ENCODE measurements at regions of chr4 and their contacts with region 1.

Region 1: DNA sequence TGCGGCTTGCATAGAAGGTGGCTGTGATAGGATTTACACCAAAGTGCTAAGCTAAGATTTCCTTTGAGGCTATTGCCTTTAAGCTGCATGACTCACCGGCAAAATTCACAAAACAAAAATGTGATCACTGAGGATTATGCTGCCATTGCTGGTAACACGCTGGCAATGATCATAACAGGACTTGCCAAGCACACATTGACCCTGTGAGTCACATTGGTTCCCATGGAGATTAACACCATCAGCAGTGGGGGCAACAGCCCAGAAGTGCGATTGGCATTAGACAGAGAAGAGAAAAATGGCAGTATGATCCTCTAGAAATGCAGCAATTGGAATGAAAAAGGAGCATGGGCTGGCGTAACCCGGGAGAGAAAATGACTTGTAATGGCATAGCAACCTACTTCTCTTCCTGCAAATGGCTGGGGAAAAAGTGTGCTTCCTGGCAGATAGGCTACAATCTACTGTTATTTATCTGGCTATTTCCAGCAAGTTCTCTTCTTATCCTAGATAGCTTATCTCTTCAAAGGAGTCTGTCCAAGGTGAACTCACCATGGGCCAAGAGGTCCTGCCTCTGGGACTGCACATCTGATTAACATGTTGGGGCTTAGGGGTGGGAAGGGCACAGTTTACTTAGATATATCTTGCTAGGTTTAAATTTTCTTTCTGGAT is 314.2 kb upstream of the IGFBP7 start:
- DNase-seq: peak; percentile 96
- H3K4me3 ChIP-seq: peak overlapping the region; percentile 24; the same call in 1 of the 2 replicates
- H3K27ac ChIP-seq: peak overlapping the region; percentile 82
- H3K4me1 ChIP-seq: peaks cover 33% of the 10 kb centered on the region
- H3K27me3 ChIP-seq: no peaks in the 10 kb centered on the region

Region 2: GRCh38 chr4:56958111-56958517 is 466.3 kb before region 1 on chr4:
- in situ Hi-C with region 1: no loop called
- DNase-seq: peak; percentile 99
- H3K4me3 ChIP-seq: peak overlapping the region; percentile 60
- H3K27ac ChIP-seq: peak overlapping the region; percentile 94
- H3K4me1 ChIP-seq: peaks cover 13% of the 10 kb centered on the region
- H3K27me3 ChIP-seq: no peaks in the 10 kb centered on the region

Region 3: GRCh38 chr4:57037982-57038604 is 386.3 kb before region 1 on chr4:
- in situ Hi-C with region 1: loop called (anchors 25 kb)
- DNase-seq: peak; percentile 74
- H3K4me3 ChIP-seq: no peak overlapping the region
- H3K27ac ChIP-seq: no peak overlapping the region
- H3K4me1 ChIP-seq: peaks cover 15% of the 10 kb centered on the region
- H3K27me3 ChIP-seq: no peaks in the 10 kb centered on the region

Region 4: GRCh38 chr4:57676394-57676793 is 252.0 kb after region 1 on chr4:
- in situ Hi-C with region 1: no loop called
- DNase-seq: no peak
- H3K4me3 ChIP-seq: no peak overlapping the region
- H3K27ac ChIP-seq: no peak overlapping the region
- H3K4me1 ChIP-seq: no peaks in the 10 kb centered on the region
- H3K27me3 ChIP-seq: no peaks in the 10 kb centered on the region

Region 5: DNA sequence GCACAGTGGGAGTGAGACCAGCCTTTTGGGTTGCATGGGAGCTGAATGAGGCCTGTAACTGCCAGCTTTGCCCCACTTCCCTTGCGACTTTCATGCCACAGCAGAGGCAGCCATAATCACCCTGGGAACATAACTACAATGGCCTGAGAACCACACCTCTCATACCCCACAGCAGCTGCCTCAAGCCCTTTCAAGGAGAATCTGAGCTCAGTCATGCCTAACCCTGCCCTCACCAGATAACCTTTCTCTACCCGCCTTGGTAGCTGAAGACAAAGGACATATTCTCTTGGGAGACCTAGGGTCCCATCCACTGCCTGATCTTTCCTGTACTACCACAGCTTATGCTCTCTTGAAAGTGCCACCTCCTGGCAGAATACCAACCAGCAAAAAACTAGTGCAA is 285.7 kb after region 1 on chr4:
- in situ Hi-C with region 1: no loop called
- DNase-seq: no peak
- H3K4me3 ChIP-seq: no peak overlapping the region
- H3K27ac ChIP-seq: no peak overlapping the region
- H3K4me1 ChIP-seq: no peaks in the 10 kb centered on the region
- H3K27me3 ChIP-seq: no peaks in the 10 kb centered on the region

Measured in GM23248 (cell line).